Kidney (tissue), 22 donors: ENCODE measurements at regions of chrX and their contacts with region 1.

Region 1: GRCh38 chrX:107654872-107655761 is 26.8 kb downstream of the PRPS1 start:
- DNase-seq: peak; percentile 74 to 87 (median 84)
- H3K4me3 ChIP-seq: peak overlapping the region in 1 of 3 donors; percentile 25
- H3K27ac ChIP-seq: peak overlapping the region in 1 of 2 donors; percentile 45
- H3K4me1 ChIP-seq: no peaks in the 10 kb centered on the region
- H3K27me3 ChIP-seq: peaks cover 3% of the 10 kb centered on the region
- CTCF ChIP-seq: peak; percentile 53

Region 2: DNA sequence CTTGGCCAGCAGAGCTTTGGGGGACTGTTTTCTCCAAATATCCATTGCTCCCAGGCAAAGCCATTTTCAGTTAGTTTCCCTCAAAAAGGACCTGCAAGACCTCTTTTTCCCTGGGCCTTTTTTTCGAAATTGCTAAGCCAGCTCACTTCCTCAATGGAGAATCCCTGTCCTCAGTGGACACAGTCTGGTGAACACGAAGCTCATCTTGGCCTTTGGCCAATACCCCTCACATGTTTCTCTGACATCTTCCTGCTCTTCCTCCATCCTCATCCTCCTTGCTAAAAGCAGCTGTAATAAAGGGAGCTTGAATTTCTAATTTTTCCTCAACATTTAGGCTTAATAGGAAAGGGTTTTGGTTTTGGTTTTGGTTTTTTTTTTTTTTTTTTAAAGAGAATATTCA is 44.5 kb before region 1 on chrX:
- intact Hi-C with region 1: no loop called
- DNase-seq: no peak
- H3K4me3 ChIP-seq: no peak overlapping the region
- H3K27ac ChIP-seq: no peak overlapping the region
- H3K4me1 ChIP-seq: no peaks in the 10 kb centered on the region
- H3K27me3 ChIP-seq: no peaks in the 10 kb centered on the region
- CTCF ChIP-seq: no peak

Region 3: DNA sequence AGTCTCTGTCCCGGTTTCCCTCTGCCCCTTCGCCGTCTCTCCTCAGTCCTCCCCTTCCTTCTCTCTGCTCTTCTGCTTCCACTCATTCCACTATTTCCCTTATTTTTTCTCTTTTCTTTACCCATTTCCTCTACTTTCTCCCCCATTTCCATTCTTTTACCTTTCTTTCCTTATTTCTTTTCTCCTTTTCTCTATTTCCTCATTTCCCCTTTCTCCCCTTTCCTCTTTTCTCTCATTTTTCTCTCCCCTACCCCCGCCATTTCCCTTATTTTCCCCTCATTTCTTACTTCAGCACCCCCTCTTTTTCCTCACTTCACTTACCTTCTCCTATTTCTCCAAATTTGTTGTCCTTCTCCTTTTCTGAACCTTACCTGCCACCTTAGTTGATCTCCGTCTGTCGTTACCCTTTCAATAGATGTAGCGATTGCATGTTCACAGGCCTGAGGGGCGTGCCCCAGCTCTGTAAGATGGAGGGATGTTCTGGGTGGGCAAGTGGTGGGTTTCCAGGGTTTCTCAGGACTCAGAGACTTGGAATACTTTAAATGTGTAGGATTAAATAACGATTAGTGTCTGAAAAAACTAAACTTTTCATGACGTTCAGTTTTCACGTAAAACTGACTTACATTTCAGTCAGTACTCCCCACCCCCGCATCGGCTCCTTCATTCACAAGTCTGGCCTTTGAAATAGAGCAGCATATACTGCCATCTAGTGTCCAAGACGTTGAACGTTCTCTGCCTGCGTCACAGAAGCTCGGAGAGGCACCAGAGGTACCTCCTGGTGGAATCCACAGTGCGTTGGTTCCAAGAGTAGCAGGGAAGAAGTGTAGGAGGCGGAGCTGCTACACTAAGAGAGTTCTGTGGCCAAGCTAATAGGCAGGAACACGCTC is 121.8 kb after region 1 on chrX:
- intact Hi-C with region 1: loop called (anchors 10 kb)
- DNase-seq: peak; percentile 83 to 93 (median 88)
- H3K4me3 ChIP-seq: peak overlapping the region; percentile 36 to 64 (median 49)
- H3K27ac ChIP-seq: no peak overlapping the region
- H3K4me1 ChIP-seq: peaks cover 0 to 13% (median 0%) of the 10 kb centered on the region in 3 donors
- H3K27me3 ChIP-seq: peaks cover 6% of the 10 kb centered on the region
- CTCF ChIP-seq: peak; percentile 82

Region 4: GRCh38 chrX:107861056-107861455 is 205.9 kb after region 1 on chrX:
- intact Hi-C with region 1: no loop called
- DNase-seq: no peak
- H3K4me3 ChIP-seq: no peak overlapping the region
- H3K27ac ChIP-seq: no peak overlapping the region
- H3K4me1 ChIP-seq: no peaks in the 10 kb centered on the region
- H3K27me3 ChIP-seq: peaks cover 3% of the 10 kb centered on the region
- CTCF ChIP-seq: no peak

Region 5: DNA sequence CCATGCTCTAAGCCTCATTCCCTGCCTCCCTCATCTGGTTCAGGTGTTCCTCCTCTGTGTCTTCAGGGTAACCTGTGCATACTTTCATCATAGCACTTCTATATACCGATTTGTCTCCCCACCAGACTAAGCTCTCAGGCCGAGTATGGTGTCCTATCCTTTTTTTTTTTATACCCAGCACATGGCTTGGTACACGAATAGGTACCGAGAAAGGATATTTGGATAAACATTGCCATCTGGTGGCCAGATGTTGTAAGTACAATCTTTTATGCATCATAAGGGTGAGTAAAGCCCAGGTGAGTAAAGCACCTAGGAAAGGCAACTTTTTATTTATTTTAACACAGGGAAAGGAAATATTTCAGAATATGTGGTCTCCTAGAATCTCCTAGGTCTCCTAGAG is 238.9 kb after region 1 on chrX:
- intact Hi-C with region 1: loop called (anchors 5 kb)
- DNase-seq: peak in 3 of 5 donors; percentile 22 to 52 (median 38)
- H3K4me3 ChIP-seq: no peak overlapping the region
- H3K27ac ChIP-seq: no peak overlapping the region
- H3K4me1 ChIP-seq: no peaks in the 10 kb centered on the region
- H3K27me3 ChIP-seq: no peaks in the 10 kb centered on the region
- CTCF ChIP-seq: no peak